ENCODE measurements at regions of chr12 and their contacts with region 1.

Region 1: GRCh38 chr12:109719236-109720022 is 5.8 kb downstream of the FAM222A start:
- DNase-seq: no peak
- H3K4me3 ChIP-seq: no peak overlapping the region
- H3K27ac ChIP-seq: no peak overlapping the region
- H3K27me3 ChIP-seq: peaks cover 57% of the 10 kb centered on the region
- CTCF ChIP-seq: peak; percentile 37; the same call in 1 of the 2 replicates

Region 2: GRCh38 chr12:109734219-109735000 is 15.0 kb after region 1 on chr12:
- CTCF ChIA-PET with region 1: no interaction called
- POLR2A ChIA-PET with region 1: no interaction called
- DNase-seq: no peak
- H3K4me3 ChIP-seq: no peak overlapping the region
- H3K27ac ChIP-seq: no peak overlapping the region
- H3K27me3 ChIP-seq: peaks cover 25% of the 10 kb centered on the region
- CTCF ChIP-seq: no peak

Region 3: GRCh38 chr12:109752117-109753053 is 33.0 kb after region 1 on chr12:
- CTCF ChIA-PET with region 1: no interaction called
- POLR2A ChIA-PET with region 1: no interaction called
- DNase-seq: no peak
- H3K4me3 ChIP-seq: no peak overlapping the region
- H3K27ac ChIP-seq: no peak overlapping the region
- H3K27me3 ChIP-seq: peaks cover 20% of the 10 kb centered on the region
- CTCF ChIP-seq: no peak

Region 4: DNA sequence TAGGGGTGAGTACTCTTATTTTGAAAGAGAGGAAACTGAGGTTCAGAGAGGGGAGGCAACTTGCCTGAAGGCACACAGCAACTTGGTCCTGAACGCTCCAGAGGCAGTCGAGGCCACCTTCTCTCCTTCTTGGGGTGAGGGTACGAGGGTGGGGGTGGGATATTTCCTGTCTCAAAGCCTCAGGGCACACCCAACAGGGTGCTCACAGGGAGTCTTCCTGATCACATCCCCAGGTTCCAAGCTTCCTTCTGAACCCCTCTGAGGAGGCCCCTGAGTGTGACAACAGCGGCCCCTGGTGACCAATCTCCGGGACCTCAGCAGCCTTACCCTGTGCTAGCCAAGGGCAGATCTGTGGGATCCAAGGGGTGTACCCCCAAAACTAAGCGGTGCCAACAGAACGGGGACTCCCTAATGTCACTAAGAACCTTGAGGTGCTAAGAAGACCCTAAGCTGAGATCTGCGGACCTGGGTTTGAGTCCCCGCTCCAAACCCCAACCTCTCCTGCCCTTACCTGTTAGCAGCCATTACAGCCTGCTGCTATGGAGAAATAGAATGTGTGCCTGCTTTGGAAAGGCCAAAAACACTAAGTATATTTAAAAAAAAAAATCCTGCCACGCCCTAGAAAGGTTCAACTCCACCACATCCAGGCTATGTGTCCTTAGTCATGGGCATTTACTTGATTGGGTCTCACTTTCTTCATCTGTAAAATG is 55.9 kb after region 1 on chr12:
- CTCF ChIA-PET with region 1: interaction called, 12 read pairs
- POLR2A ChIA-PET with region 1: no interaction called
- DNase-seq: peak; percentile 30
- H3K4me3 ChIP-seq: no peak overlapping the region
- H3K27ac ChIP-seq: no peak overlapping the region
- H3K27me3 ChIP-seq: peaks cover 6% of the 10 kb centered on the region
- CTCF ChIP-seq: peak; percentile 96

Measured in AG04450 (cell line).